ENCODE measurements at regions of chr12 and their contacts with region 1.

Region 1: GRCh38 chr12:96489103-96490056 is at the start of gene CFAP54:
- DNase-seq: no peak
- H3K4me3 ChIP-seq: peak within 1 kb of the TSS; percentile 89
- CTCF ChIP-seq: peak; percentile 90

Region 2: GRCh38 chr12:96445691-96446583 is 43.4 kb before region 1 on chr12:
- CTCF ChIA-PET with region 1: interaction called, 19 read pairs
- POLR2A ChIA-PET with region 1: interaction called, 3 read pairs
- DNase-seq: peak; percentile 71
- H3K4me3 ChIP-seq: no peak overlapping the region; the same call in 1 of the 2 replicates
- CTCF ChIP-seq: no peak

Region 3: GRCh38 chr12:96471368-96472050 is 17.9 kb before region 1 on chr12:
- CTCF ChIA-PET with region 1: interaction called, 12 read pairs
- POLR2A ChIA-PET with region 1: no interaction called
- DNase-seq: no peak
- H3K4me3 ChIP-seq: no peak overlapping the region
- CTCF ChIP-seq: no peak

Region 4: GRCh38 chr12:96501139-96501761 is 11.9 kb after region 1 on chr12:
- CTCF ChIA-PET with region 1: interaction called, 22 read pairs
- POLR2A ChIA-PET with region 1: no interaction called
- DNase-seq: no peak
- H3K4me3 ChIP-seq: no peak overlapping the region
- CTCF ChIP-seq: no peak

Region 5: GRCh38 chr12:97223419-97223818 is 734.0 kb after region 1 on chr12:
- CTCF ChIA-PET with region 1: no interaction called
- POLR2A ChIA-PET with region 1: no interaction called
- DNase-seq: no peak
- H3K4me3 ChIP-seq: no peak overlapping the region
- CTCF ChIP-seq: no peak